CD4-positive, alpha-beta memory T cell (primary cell): ENCODE measurements at regions of chr6 and their contacts with region 1.

Region 1: GRCh38 chr6:53294095-53294494 is 54.7 kb downstream of the ELOVL5 start:
- DNase-seq: no peak
- H3K4me3 ChIP-seq: no peak overlapping the region
- H3K4me3 Mint-ChIP-seq: peak overlapping the region in 2 of 8 donors; percentile 6 to 34
- H3K27ac ChIP-seq: peak overlapping the region; percentile 27
- H3K27ac Mint-ChIP-seq: peak overlapping the region; percentile 53 to 94 (median 83)
- H3K4me1 ChIP-seq: peaks cover 97% of the 10 kb centered on the region
- H3K4me1 Mint-ChIP-seq: peaks cover 69 to 97% (median 83%) of the 10 kb centered on the region in 4 donors
- H3K27me3 ChIP-seq: no peaks in the 10 kb centered on the region
- H3K27me3 Mint-ChIP-seq: no peaks in the 10 kb centered on the region

Region 2: DNA sequence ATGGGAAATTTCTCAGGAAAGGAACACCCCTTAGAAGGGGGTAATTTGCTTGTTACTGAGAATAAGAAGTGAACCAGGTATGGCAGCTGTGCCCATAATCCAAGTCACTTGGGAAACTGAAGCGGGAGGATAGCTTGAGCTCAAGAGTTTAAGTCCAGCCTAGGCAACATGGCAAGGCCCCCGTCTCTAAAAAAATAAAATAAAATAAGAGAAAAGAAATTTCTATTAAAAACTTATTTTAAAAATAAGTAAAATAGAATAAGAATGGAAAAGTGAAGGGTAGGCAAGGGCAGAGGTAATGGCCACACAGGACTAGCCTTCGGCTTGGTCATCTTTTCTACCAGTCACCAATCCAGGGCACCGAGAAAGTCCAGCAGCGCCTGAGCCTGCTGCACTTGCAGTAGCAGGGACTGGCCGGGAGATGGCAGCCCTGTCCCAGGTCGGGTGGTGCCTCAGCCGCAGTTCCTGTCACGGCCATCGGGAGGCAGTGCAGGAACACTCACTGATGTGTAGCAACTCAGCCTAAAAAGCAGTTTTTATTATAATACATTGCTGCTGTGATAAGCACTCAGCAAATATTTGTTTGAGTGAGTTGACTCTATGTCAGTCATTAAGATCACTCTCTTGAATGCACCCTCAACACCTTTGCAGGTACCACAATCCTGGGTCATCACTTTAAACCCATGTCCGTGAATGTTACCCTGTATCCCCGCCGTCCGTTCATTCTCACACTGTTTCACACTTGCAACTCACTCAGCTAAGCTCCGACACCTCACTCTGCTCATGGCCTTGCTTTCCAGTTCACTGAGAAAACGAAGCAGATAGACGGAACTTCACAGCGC is 122.3 kb before region 1 on chr6:
- CTCF ChIA-PET with region 1: interaction called, 20 read pairs
- POLR2A ChIA-PET with region 1: no interaction called
- intact Hi-C with region 1: loop called (anchors 2 kb)
- DNase-seq: peak; percentile 83 to 90 (median 85)
- H3K4me3 ChIP-seq: no peak overlapping the region
- H3K4me3 Mint-ChIP-seq: no peak overlapping the region
- H3K27ac ChIP-seq: no peak overlapping the region
- H3K27ac Mint-ChIP-seq: no peak overlapping the region
- H3K4me1 ChIP-seq: no peaks in the 10 kb centered on the region
- H3K4me1 Mint-ChIP-seq: no peaks in the 10 kb centered on the region
- H3K27me3 ChIP-seq: no peaks in the 10 kb centered on the region
- H3K27me3 Mint-ChIP-seq: no peaks in the 10 kb centered on the region

Region 3: DNA sequence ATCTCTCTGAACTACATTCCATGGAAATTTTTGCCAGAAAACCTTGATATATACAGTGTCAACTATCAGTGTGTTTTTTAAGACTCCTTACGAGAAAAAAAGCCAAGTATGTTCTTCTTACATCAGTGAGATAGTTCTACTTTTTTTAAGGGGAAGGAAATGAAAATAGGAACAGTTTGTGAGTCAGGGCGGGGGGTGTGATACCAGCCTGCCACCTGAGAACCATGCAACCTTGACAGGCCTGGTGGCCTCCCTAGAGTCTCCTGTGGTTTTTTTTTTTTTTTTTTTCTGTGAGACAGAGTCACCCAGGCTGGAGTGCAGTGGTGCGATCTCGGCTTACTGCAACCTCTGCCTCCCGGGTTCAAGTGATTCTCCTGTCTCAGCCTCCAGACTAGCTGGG is 49.1 kb before region 1 on chr6:
- CTCF ChIA-PET with region 1: no interaction called
- POLR2A ChIA-PET with region 1: no interaction called
- intact Hi-C with region 1: loop called (anchors 5 kb)
- DNase-seq: peak in 1 of 5 donors; percentile 10
- H3K4me3 ChIP-seq: no peak overlapping the region
- H3K4me3 Mint-ChIP-seq: no peak overlapping the region
- H3K27ac ChIP-seq: no peak overlapping the region
- H3K27ac Mint-ChIP-seq: peak overlapping the region in 1 of 7 donors; percentile 19
- H3K4me1 ChIP-seq: peaks cover 18% of the 10 kb centered on the region
- H3K4me1 Mint-ChIP-seq: peaks cover 16 to 38% (median 28%) of the 10 kb centered on the region in 4 donors
- H3K27me3 ChIP-seq: no peaks in the 10 kb centered on the region
- H3K27me3 Mint-ChIP-seq: no peaks in the 10 kb centered on the region

Region 4: GRCh38 chr6:53335208-53335994 is 41.3 kb after region 1 on chr6:
- CTCF ChIA-PET with region 1: interaction called, 17 read pairs
- POLR2A ChIA-PET with region 1: interaction called, 17 read pairs
- intact Hi-C with region 1: loop called (anchors 2 kb)
- DNase-seq: peak; percentile 80 to 92 (median 86)
- H3K4me3 ChIP-seq: peak overlapping the region; percentile 32 to 66
- H3K4me3 Mint-ChIP-seq: peak overlapping the region; percentile 85 to 96 (median 91)
- H3K27ac ChIP-seq: peak overlapping the region; percentile 88
- H3K27ac Mint-ChIP-seq: peak overlapping the region; percentile 95 to 100 (median 99)
- H3K4me1 ChIP-seq: peaks cover 96% of the 10 kb centered on the region
- H3K4me1 Mint-ChIP-seq: peaks cover 80 to 94% (median 87%) of the 10 kb centered on the region in 4 donors
- H3K27me3 ChIP-seq: no peaks in the 10 kb centered on the region
- H3K27me3 Mint-ChIP-seq: no peaks in the 10 kb centered on the region

Region 5: GRCh38 chr6:53359072-53359842 is 65.2 kb after region 1 on chr6:
- CTCF ChIA-PET with region 1: interaction called, 9 read pairs
- POLR2A ChIA-PET with region 1: interaction called, 16 read pairs
- intact Hi-C with region 1: loop called (anchors 1 kb)
- DNase-seq: peak; percentile 85 to 93 (median 92)
- H3K4me3 ChIP-seq: peak overlapping the region; percentile 50 to 74
- H3K4me3 Mint-ChIP-seq: peak overlapping the region; percentile 81 to 96 (median 91)
- H3K27ac ChIP-seq: peak overlapping the region; percentile 99
- H3K27ac Mint-ChIP-seq: peak overlapping the region; percentile 87 to 100 (median 98)
- H3K4me1 ChIP-seq: peaks cover 53% of the 10 kb centered on the region
- H3K4me1 Mint-ChIP-seq: peaks cover 35 to 61% (median 42%) of the 10 kb centered on the region in 4 donors
- H3K27me3 ChIP-seq: no peaks in the 10 kb centered on the region
- H3K27me3 Mint-ChIP-seq: no peaks in the 10 kb centered on the region